Activated T-helper 1 cell treated with anti-CD3 and anti-CD28 coated beads, Interleukin-12 subunit alpha, Interleukin-12 subunit beta, Interleukin-2, Interleukin-4 antibody, amounts not matched to agents 30 ng/mL and 10 ng/mL and 1 ng/mL, durations not matched to agents 14 hours and 24 hours and 36 hours (primary cell): ENCODE measurements at regions of chr4 and their contacts with region 1.

Region 1: GRCh38 chr4:16443504-16444088 is 217.3 kb upstream of the TAPT1 start:
- DNase-seq: no peak
- H3K4me3 Mint-ChIP-seq: no peak overlapping the region
- H3K27ac Mint-ChIP-seq: no peak overlapping the region
- H3K4me1 Mint-ChIP-seq: no peaks in the 10 kb centered on the region
- H3K27me3 Mint-ChIP-seq: no peaks in the 10 kb centered on the region

Region 2: DNA sequence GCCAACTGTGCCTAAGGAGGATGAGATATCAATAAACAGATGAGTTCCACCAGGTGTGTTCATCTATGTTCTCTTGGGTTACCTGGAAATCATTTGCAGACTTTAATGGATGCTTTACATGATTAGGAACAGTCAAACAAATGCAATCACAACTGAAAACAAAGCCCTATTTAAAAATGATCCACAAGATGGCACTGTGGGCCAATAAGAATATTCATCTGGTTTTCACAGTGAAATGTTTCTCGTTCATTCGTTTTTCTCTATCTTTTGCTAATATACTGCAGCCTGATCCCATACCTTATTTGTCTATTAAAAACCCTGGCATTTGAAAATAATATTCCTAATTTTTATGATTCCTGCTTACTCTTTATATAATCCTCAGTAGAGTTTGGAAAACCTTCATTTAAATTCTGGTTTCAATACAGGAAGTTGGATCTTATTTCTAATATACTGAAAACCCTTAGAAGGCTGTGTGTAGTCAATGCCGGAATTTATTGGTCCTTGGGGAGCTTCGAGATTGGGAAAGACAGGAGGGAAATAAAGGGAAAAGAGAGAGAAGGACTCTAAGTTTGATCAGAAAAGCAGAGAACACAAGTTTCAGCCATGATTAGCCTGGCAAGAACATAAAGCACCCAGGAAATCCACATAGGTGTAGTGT is 153.6 kb before region 1 on chr4:
- intact Hi-C with region 1: loop called (anchors 1 kb)
- DNase-seq: no peak
- H3K4me3 Mint-ChIP-seq: no peak overlapping the region
- H3K27ac Mint-ChIP-seq: no peak overlapping the region
- H3K4me1 Mint-ChIP-seq: no peaks in the 10 kb centered on the region
- H3K27me3 Mint-ChIP-seq: peaks cover 3% of the 10 kb centered on the region

Region 3: GRCh38 chr4:16431866-16432265 is 11.7 kb before region 1 on chr4:
- intact Hi-C with region 1: no loop called
- DNase-seq: no peak
- H3K4me3 Mint-ChIP-seq: no peak overlapping the region
- H3K27ac Mint-ChIP-seq: no peak overlapping the region
- H3K4me1 Mint-ChIP-seq: no peaks in the 10 kb centered on the region
- H3K27me3 Mint-ChIP-seq: no peaks in the 10 kb centered on the region